Dendritic cell treated with granulocyte-macrophage colony-stimulating factor and Interleukin-4, amounts not matched to agents 40 ng/mL and 50 ng/mL, for 4 days (primary cell): ENCODE measurements at regions of chrX and their contacts with region 1.

Region 1: GRCh38 chrX:139739138-139739537 is 31.2 kb upstream of the MCF2 start:
- H3K4me3 Mint-ChIP-seq: no peak overlapping the region
- H3K27ac Mint-ChIP-seq: no peak overlapping the region
- H3K4me1 Mint-ChIP-seq: no peaks in the 10 kb centered on the region
- H3K27me3 Mint-ChIP-seq: no peaks in the 10 kb centered on the region

Region 2: GRCh38 chrX:139787601-139788000 is 48.5 kb after region 1 on chrX:
- intact Hi-C with region 1: no loop called
- H3K4me3 Mint-ChIP-seq: no peak overlapping the region
- H3K27ac Mint-ChIP-seq: no peak overlapping the region
- H3K4me1 Mint-ChIP-seq: peaks cover 14% of the 10 kb centered on the region
- H3K27me3 Mint-ChIP-seq: no peaks in the 10 kb centered on the region

Region 3: DNA sequence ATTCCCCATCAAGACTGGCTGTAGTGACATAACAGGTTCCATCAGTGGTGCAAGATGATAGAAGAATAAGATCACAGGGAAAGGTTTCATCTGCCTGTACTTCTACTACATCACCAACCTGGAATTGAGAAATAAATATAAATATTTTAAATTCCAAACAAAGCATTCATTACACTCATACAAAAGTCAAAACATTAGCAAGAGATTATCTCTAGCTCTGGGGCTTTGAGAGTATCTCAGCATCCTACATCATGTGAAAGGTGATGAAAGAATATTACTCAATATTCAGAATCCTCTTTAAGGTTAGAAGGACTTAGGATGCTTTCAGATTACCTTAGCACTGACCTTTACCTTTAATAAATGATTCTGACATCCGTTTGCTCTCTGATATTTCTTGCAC is 65.3 kb after region 1 on chrX:
- intact Hi-C with region 1: loop called (anchors 2 kb)
- H3K4me3 Mint-ChIP-seq: no peak overlapping the region
- H3K27ac Mint-ChIP-seq: no peak overlapping the region
- H3K4me1 Mint-ChIP-seq: no peaks in the 10 kb centered on the region
- H3K27me3 Mint-ChIP-seq: no peaks in the 10 kb centered on the region